ENCODE measurements at regions of chr19 and their contacts with region 1.

Region 1: DNA sequence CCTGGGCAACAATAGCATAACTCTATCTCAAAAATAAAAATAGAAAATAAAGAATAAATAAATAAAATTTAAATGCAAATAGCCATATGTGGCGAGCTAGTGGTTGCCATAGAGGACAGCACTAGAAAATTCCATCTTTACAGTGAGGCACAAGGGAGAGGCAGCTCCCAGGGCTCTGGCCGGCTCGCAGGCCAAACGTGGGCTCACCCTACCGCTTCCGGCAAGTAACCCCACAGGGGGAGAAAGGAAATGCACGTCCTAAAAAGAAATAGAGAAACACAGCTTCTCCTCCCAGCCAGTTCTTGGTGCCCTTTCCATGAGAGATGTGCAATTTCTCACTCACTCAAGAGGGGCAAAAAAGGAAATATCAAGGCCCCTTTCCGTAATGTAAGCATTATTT is 12.4 kb upstream of the GRWD1 start:
- DNase-seq: no peak
- ATAC-seq: no peak
- H3K4me3 ChIP-seq: no peak overlapping the region
- H3K27ac ChIP-seq: no peak overlapping the region
- H3K4me1 ChIP-seq: no peaks in the 10 kb centered on the region
- H3K27me3 ChIP-seq: no peaks in the 10 kb centered on the region
- CTCF ChIP-seq: no peak
- POLR2A ChIP-seq: no peak
- RAD21 ChIP-seq: no peak

Region 2: GRCh38 chr19:48379058-48379457 is 54.3 kb before region 1 on chr19:
- CTCF ChIA-PET with region 1: no interaction called
- POLR2A ChIA-PET with region 1: interaction called, 19 read pairs
- dilution Hi-C with region 1: no loop called
- in situ Hi-C with region 1: no loop called
- intact Hi-C with region 1: no loop called
- DNase-seq: no peak
- ATAC-seq: no peak
- H3K4me3 ChIP-seq: no peak overlapping the region
- H3K27ac ChIP-seq: no peak overlapping the region
- H3K4me1 ChIP-seq: no peaks in the 10 kb centered on the region
- H3K27me3 ChIP-seq: peaks cover 2% of the 10 kb centered on the region; the same call in 1 of the 2 replicates
- CTCF ChIP-seq: no peak
- POLR2A ChIP-seq: no peak
- RAD21 ChIP-seq: no peak

Region 3: DNA sequence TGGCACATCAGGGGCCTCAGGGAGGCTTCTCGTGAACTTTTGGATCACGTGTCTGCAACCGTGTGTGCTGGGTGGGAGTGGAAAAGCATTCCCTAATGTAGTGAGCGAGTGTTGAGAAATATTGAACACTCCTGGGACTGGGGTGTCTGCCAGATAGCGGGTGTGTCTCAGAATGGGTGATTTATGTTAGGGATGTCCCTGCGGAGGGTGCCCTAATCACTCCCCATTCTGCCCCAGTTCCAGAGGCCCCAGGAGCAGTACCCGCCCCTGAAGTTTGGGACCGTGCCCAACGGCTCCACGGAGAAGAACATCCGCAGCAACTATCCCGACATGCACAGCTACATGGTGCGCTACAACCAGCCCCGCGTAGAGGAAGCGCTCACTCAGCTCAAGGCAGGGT is 11.8 kb before region 1 on chr19:
- CTCF ChIA-PET with region 1: no interaction called
- POLR2A ChIA-PET with region 1: no interaction called
- dilution Hi-C with region 1: no loop called
- in situ Hi-C with region 1: no loop called
- intact Hi-C with region 1: no loop called
- DNase-seq: no peak
- ATAC-seq: no peak
- H3K4me3 ChIP-seq: no peak overlapping the region
- H3K27ac ChIP-seq: no peak overlapping the region
- H3K4me1 ChIP-seq: peaks cover 4% of the 10 kb centered on the region
- H3K27me3 ChIP-seq: peaks cover 3% of the 10 kb centered on the region; the same call in 1 of the 2 replicates
- CTCF ChIP-seq: no peak
- POLR2A ChIP-seq: no peak
- RAD21 ChIP-seq: no peak

Measured in IMR-90 (cell line).